ENCODE measurements at regions of chr6 and their contacts with region 1.

Region 1: GRCh38 chr6:85642774-85643536 is at the start of gene SYNCRIP:
- DNase-seq: peak; percentile 99
- H3K4me3 ChIP-seq: peak within 1 kb of the TSS; percentile 87 to 91 (median 90)
- H3K27ac ChIP-seq: peak within 1 kb of the TSS; percentile 100
- H3K4me1 ChIP-seq: peaks cover 27% of the 10 kb centered on the region
- H3K27me3 ChIP-seq: no peaks in the 10 kb centered on the region
- CTCF ChIP-seq: no peak
- POLR2A ChIP-seq: peak; percentile 97
- total RNA-seq, gene SYNCRIP: 150 and 155 TPM in 2 replicates

Region 2: DNA sequence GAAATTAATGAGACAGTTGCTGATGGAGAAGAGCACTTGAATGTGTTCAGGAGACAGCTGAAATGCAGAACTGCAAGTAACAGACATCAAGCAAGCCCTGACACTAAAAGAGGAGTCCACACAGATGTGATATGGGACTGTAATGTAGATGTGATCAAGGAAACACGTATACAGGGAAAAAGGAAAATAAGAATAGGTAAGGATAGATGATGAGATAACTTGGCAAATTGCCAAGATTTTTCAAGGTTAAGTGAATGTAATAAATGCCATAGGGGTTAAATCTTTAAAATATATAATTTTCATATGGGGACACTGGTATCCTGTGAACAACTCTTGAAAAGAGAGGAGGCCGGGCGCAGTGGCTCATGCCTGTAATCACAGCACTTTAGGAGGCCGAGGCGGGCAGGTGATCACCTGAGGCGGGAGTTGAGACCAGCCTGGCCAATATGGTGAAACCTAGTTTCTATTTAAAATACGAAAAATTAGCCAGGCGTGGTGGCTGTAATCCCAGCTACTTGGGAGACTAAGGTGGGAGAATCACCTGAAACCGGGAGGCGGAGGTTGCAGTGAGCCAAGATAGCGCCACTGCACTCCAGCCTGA is 42.1 kb before region 1 on chr6:
- CTCF ChIA-PET with region 1: no interaction called
- POLR2A ChIA-PET with region 1: no interaction called
- dilution Hi-C with region 1: no loop called
- intact Hi-C with region 1: no loop called
- DNase-seq: no peak
- H3K4me3 ChIP-seq: no peak overlapping the region
- H3K27ac ChIP-seq: no peak overlapping the region
- H3K4me1 ChIP-seq: no peaks in the 10 kb centered on the region
- H3K27me3 ChIP-seq: no peaks in the 10 kb centered on the region
- CTCF ChIP-seq: no peak
- POLR2A ChIP-seq: no peak

Region 3: DNA sequence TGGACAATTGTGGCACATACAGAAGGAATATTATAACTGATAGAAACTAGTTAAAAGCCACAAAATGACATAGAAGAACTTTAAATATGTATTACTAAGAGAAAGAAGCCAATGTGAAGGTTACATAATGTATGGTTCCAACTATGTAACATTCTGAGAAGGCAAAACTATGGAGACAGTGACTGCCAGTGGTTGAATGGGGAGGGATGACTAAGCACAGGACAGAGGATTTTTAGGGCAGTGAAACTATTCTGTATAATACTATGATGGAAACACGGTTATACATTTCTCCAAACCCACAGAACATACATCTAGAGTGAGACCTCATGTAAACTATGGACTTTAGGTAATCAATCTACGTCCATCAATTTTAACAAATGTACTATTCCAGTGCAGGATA is 22.6 kb before region 1 on chr6:
- CTCF ChIA-PET with region 1: no interaction called
- POLR2A ChIA-PET with region 1: interaction called, 3 read pairs
- dilution Hi-C with region 1: no loop called
- intact Hi-C with region 1: loop called (anchors 2 kb)
- DNase-seq: no peak
- H3K4me3 ChIP-seq: no peak overlapping the region
- H3K27ac ChIP-seq: no peak overlapping the region
- H3K4me1 ChIP-seq: no peaks in the 10 kb centered on the region
- H3K27me3 ChIP-seq: no peaks in the 10 kb centered on the region
- CTCF ChIP-seq: no peak
- POLR2A ChIP-seq: no peak

Region 4: DNA sequence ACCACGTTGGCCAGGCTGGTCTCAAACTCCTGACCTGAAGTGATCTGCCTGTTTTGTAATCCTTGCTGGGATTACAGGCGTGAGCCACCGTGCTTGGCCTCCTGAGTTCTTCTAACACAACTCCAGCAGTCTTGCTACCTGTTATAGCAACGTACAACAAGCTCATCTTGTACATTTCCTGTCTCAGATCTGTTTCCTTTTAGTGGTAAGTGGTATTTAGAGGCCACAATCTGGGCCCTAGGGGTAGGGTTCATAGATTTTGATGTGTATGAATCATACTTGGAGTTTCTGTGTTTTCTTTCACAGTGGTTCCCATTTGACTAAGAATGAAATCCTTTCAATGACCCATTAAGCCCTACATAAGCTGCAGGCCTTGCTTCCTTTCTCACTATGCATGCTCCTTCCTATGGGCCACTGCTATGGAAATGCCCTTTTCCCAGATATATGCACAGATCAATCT is 26.8 kb after region 1 on chr6:
- CTCF ChIA-PET with region 1: interaction called, 78 read pairs
- POLR2A ChIA-PET with region 1: interaction called, 372 read pairs
- dilution Hi-C with region 1: no loop called
- intact Hi-C with region 1: no loop called
- DNase-seq: peak; percentile 28
- H3K4me3 ChIP-seq: no peak overlapping the region
- H3K27ac ChIP-seq: no peak overlapping the region
- H3K4me1 ChIP-seq: peaks cover 16% of the 10 kb centered on the region
- H3K27me3 ChIP-seq: no peaks in the 10 kb centered on the region
- CTCF ChIP-seq: no peak
- POLR2A ChIP-seq: no peak

Region 5: DNA sequence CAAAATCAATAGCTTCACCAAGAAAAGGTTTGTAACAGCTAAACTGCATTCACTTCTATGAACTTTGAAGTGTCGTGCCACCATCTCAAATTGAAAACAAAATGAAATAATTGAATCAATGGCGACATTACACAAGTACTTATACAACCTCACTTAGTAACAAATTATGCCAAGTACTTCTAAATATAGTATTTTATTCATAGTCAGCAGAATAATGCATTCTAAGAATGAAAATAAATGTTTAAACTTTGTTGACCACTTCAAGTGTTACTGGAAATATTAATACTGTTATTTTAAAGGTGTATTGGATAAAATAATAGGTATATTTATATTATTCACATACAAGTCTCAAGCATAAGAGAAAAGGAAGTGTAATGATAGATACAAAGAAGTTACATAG is 1014.2 kb after region 1 on chr6:
- CTCF ChIA-PET with region 1: no interaction called
- POLR2A ChIA-PET with region 1: no interaction called
- dilution Hi-C with region 1: no loop called
- intact Hi-C with region 1: no loop called
- DNase-seq: no peak
- H3K4me3 ChIP-seq: no peak overlapping the region
- H3K27ac ChIP-seq: no peak overlapping the region
- H3K4me1 ChIP-seq: no peaks in the 10 kb centered on the region
- H3K27me3 ChIP-seq: no peaks in the 10 kb centered on the region
- CTCF ChIP-seq: no peak
- POLR2A ChIP-seq: no peak